ENCODE measurements at regions of chr3 and their contacts with region 1.

Region 1: DNA sequence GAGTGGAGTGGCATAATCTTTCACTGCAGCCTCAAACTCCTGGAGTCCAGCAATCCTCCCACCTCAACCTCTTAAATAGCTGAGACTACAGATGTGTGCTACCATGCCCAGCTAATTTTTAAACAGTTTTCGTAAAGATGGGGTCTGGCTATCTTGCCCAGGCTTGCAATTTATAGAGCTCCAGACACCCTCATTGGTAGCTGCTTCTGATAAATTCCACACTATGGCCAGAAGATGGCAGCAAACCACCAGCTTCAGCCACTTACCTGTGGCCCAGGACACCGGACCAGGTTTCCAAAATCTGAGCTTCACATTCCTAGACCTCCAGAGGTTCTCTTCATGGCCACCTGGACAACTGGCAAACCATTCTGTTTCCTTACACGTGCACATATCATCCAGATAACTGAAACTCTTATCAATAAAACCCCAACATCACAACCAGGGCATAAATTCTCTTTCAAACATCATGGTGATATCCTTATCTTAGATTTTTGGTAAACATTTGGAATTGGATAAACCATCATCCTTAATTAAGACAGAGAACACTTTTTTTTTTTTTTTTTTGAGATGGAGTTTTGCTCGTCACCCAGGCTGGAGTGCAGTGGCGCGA is 28.9 kb downstream of the FBXW12 start:
- DNase-seq: peak; percentile 67 to 79 (median 72)
- H3K4me3 ChIP-seq: no peak overlapping the region
- H3K27ac ChIP-seq: no peak overlapping the region
- H3K4me1 ChIP-seq: peaks cover 0 to 6% (median 4%) of the 10 kb centered on the region in 4 experiments
- H3K27me3 ChIP-seq: no peaks in the 10 kb centered on the region

Region 2: DNA sequence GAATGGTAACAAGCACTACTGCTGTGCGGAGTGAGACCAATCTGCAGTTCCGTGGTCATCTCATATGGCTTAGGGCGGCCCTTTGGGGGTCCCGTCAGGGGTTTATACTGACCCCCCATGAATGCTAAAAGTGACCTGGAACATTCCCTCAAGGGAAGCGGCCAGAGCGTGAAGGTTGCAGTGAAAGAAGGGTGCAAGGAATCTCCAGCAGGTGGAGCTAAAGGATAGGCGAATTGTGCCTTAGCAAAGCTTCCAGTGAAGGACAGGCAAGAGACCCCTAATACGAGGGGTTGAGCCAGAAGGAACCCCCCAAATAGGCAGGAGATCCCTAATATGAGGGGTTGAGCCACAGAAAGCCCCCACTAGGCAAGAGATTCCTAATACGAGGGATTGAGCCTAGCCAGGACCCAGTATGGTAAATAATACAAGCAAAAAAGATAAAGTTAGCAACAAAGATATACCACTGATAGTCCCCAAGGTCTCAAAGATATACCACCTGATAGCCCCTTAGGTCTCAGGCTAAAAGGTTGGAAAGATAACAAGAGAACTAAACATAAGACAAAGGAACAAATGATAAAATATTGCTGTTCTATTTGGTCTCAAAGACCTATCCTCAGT is 127.2 kb before region 1 on chr3:
- CTCF ChIA-PET with region 1: interaction called, 50 read pairs
- POLR2A ChIA-PET with region 1: no interaction called
- DNase-seq: peak; percentile 69 to 82 (median 77)
- H3K4me3 ChIP-seq: no peak overlapping the region
- H3K27ac ChIP-seq: no peak overlapping the region
- H3K4me1 ChIP-seq: no peaks in the 10 kb centered on the region
- H3K27me3 ChIP-seq: no peaks in the 10 kb centered on the region

Region 3: DNA sequence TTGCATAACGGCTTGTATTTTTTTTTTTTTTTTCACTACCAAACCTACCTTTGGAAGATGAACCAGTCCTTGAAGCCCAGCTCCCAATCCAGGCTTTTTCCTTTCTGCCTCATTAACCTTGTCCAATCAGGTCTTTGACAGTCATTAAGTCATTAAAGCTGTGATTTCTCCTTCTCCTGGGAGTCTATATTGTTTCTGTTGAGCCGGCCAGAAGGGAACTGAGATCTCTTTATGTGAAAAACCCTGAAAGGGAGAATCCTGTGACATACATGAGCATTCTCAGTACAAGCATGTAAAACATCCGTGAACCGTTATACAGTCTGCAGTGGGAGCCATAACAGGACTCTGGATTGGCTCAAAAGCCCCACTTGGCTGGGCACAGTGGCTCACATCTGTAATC is 120.0 kb before region 1 on chr3:
- CTCF ChIA-PET with region 1: interaction called, 50 read pairs
- POLR2A ChIA-PET with region 1: interaction called, 4 read pairs
- DNase-seq: no peak
- H3K4me3 ChIP-seq: no peak overlapping the region
- H3K27ac ChIP-seq: no peak overlapping the region
- H3K4me1 ChIP-seq: no peaks in the 10 kb centered on the region
- H3K27me3 ChIP-seq: no peaks in the 10 kb centered on the region

Region 4: GRCh38 chr3:48556793-48557626 is 156.1 kb after region 1 on chr3 and contains the start of gene PFKFB4:
- CTCF ChIA-PET with region 1: interaction called, 11 read pairs
- POLR2A ChIA-PET with region 1: no interaction called
- DNase-seq: peak; percentile 99
- H3K4me3 ChIP-seq: peak within 1 kb of the TSS; percentile 40 to 86 (median 73)
- H3K27ac ChIP-seq: peak within 1 kb of the TSS in 1 of 2 experiments; percentile 66
- H3K4me1 ChIP-seq: peaks cover 4 to 74% (median 54%) of the 10 kb centered on the region in 4 experiments
- H3K27me3 ChIP-seq: no peaks in the 10 kb centered on the region